Common myeloid progenitor, CD34-positive (primary cell): ENCODE measurements at regions of chr11 and their contacts with region 1.

Region 1: GRCh38 chr11:12888525-12889158 is 120.5 kb upstream of the RASSF10 start:
- DNase-seq: peak; percentile 68 to 85 (median 77)
- H3K4me3 ChIP-seq: no peak overlapping the region
- H3K27ac ChIP-seq: no peak overlapping the region
- H3K4me1 ChIP-seq: no peaks in the 10 kb centered on the region
- H3K27me3 ChIP-seq: peaks cover 0 to 9% (median 7%) of the 10 kb centered on the region in 5 experiments

Region 2: GRCh38 chr11:12288212-12288930 is 600.3 kb before region 1 on chr11:
- CTCF ChIA-PET with region 1: interaction called, 10 read pairs
- POLR2A ChIA-PET with region 1: no interaction called
- DNase-seq: peak; percentile 31 to 61 (median 43)
- H3K4me3 ChIP-seq: no peak overlapping the region
- H3K27ac ChIP-seq: no peak overlapping the region
- H3K4me1 ChIP-seq: peaks cover 0 to 16% (median 10%) of the 10 kb centered on the region in 4 experiments
- H3K27me3 ChIP-seq: peaks cover 0 to 5% (median 0%) of the 10 kb centered on the region in 5 experiments

Region 3: DNA sequence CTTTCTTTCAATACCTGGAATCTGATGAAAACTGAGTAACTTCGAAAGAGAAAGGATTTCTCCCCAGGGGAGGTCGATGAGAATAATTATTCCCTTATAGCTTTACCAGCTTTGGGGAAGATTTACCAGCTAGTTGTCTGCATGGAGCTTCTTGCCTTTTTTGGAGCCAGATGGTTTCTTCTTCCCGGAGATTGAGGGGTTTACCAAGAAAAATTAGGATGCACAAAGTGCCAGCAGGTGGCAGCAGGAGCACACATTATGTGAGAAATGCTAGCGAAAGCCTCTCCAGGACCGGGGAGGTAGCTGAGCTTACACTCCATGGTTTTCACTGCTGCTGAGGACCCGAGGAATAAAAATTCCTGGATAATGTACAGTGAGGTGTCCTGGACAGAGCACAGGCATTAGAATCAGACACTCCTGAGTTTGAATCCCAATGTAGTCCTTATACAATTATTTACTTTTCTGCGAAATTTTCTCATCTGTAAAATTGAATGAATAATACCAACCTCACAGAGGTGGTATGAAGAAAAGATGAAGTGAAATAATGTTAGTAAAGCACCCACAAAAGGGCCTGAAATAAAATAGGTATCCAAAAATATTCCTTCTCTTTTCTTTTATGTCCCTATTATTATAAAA is 557.3 kb before region 1 on chr11:
- CTCF ChIA-PET with region 1: interaction called, 67 read pairs
- POLR2A ChIA-PET with region 1: no interaction called
- DNase-seq: peak; percentile 62 to 80 (median 69)
- H3K4me3 ChIP-seq: no peak overlapping the region
- H3K27ac ChIP-seq: no peak overlapping the region
- H3K4me1 ChIP-seq: no peaks in the 10 kb centered on the region
- H3K27me3 ChIP-seq: peaks cover 0 to 11% (median 6%) of the 10 kb centered on the region in 5 experiments

Region 4: DNA sequence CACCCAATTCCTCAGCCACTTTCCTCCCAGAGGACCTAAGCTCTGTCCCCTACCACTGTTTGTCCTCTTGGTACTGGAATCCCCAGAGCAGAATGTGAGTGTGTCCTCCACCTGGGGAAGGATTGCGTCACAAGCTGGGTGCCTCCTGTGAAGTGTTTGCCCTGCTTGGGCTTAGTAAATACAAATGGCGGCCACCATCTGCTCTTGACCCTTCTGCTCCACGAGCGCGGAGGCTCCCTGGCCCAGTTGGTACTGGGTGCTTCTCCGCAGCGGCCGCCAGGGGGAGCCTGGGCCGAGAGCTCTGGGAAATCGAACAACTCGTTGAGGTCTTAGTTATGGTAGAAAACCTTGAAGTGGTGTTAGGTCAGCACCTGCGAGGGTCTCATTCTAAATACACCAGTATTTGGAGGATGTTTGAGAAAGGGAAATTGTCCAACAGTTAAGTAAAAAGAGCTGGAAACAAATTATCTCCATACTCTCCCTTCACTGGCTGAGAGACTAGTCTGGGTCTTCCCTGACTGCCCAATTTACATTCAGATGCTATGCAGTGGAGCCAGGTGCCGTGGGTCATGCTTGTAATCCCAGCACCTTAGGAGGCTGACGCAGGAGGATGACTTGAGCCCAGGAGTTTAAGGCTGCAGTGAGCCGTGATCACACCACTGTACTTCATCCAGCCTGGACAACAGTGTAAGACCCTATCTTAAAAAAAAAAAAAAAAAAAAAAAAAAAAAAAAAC is 289.1 kb before region 1 on chr11:
- CTCF ChIA-PET with region 1: interaction called, 53 read pairs
- POLR2A ChIA-PET with region 1: no interaction called
- DNase-seq: peak; percentile 17 to 34 (median 24)
- H3K4me3 ChIP-seq: no peak overlapping the region
- H3K27ac ChIP-seq: no peak overlapping the region
- H3K4me1 ChIP-seq: no peaks in the 10 kb centered on the region
- H3K27me3 ChIP-seq: peaks cover 3 to 21% (median 11%) of the 10 kb centered on the region in 5 experiments

Region 5: DNA sequence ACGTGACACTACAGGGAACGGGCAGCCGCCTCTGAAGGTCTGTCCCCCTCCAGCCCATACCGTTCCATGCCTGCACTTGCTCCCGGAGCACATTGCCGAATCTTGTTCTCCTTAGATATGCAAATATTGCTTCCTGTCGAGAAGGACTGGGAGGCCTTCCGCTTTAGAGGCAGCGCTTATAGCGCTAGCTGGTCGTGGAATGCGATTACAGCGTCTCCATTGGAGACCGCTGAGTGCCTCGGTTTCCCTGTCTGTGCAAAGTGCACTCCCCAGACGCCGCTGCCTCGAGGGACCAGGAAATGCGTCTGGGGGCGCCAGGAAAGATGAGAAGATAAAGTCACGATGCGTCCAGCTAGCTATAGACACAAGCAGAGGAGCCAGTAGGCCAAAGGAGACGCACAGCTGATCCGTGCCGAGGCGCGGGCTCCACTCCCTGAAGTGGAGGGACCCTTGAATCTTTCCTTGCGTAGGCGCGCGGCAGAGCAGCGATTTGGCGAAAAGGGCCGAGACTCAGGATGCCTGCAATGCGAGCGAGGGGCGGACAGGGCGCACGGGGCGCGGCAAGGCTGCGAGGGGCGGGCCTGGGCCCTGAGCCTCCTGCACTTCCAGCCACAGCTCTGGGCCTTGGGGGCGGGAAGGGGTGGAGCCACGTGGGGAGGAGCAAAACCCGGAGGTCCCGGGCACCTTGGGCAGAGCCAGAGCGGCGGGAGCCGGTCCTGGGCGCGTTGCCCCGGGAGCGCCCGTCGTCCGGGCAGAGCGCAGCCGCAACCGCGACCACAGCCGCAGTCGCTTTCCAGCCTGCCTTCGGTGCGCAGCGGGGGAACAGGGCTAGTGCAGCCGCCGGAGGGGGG is 120.2 kb after region 1 on chr11 and contains the start of gene RASSF10:
- CTCF ChIA-PET with region 1: no interaction called
- POLR2A ChIA-PET with region 1: no interaction called
- DNase-seq: peak; percentile 31 to 63 (median 60)
- H3K4me3 ChIP-seq: peak within 1 kb of the TSS in 5 of 7 experiments; percentile 24 to 66 (median 50)
- H3K27ac ChIP-seq: no peak within 1 kb of the TSS
- H3K4me1 ChIP-seq: peaks cover 0 to 24% (median 20%) of the 10 kb centered on the region in 4 experiments
- H3K27me3 ChIP-seq: peaks cover 25 to 97% (median 46%) of the 10 kb centered on the region in 5 experiments